ENCODE measurements at regions of chr12 and their contacts with region 1.

Region 1: GRCh38 chr12:104215638-104216297 is at the start of gene TXNRD1:
- DNase-seq: peak; percentile 67 to 91 (median 83)
- ATAC-seq: peak; percentile 97
- H3K4me3 ChIP-seq: peak within 1 kb of the TSS; percentile 63 to 69
- H3K4me3 Mint-ChIP-seq: peak within 1 kb of the TSS; percentile 83
- H3K27ac ChIP-seq: peak within 1 kb of the TSS in 1 of 2 experiments; percentile 26
- H3K27ac Mint-ChIP-seq: peak within 1 kb of the TSS; percentile 64
- H3K4me1 ChIP-seq: peaks cover 9% of the 10 kb centered on the region
- H3K4me1 Mint-ChIP-seq: peaks cover 18% of the 10 kb centered on the region
- H3K27me3 ChIP-seq: no peaks in the 10 kb centered on the region
- H3K27me3 Mint-ChIP-seq: peaks cover 3% of the 10 kb centered on the region
- CTCF ChIP-seq: peak; percentile 80
- total RNA-seq, gene TXNRD1: 25.1 to 33.1 TPM

Region 2: GRCh38 chr12:104303538-104304151 is 87.9 kb after region 1 on chr12 and contains the start of gene EID3:
- CTCF ChIA-PET with region 1: interaction called, 10 read pairs
- POLR2A ChIA-PET with region 1: interaction called, 4 read pairs
- intact Hi-C with region 1: loop called (anchors 1 to 5 kb)
- DNase-seq: peak; percentile 78 to 92 (median 91)
- ATAC-seq: peak; percentile 96
- H3K4me3 ChIP-seq: peak within 1 kb of the TSS; percentile 63 to 74
- H3K4me3 Mint-ChIP-seq: peak within 1 kb of the TSS; percentile 95
- H3K27ac ChIP-seq: peak within 1 kb of the TSS; percentile 60 to 80
- H3K27ac Mint-ChIP-seq: peak within 1 kb of the TSS; percentile 98
- H3K4me1 ChIP-seq: peaks cover 27% of the 10 kb centered on the region
- H3K4me1 Mint-ChIP-seq: peaks cover 62% of the 10 kb centered on the region
- H3K27me3 ChIP-seq: no peaks in the 10 kb centered on the region
- H3K27me3 Mint-ChIP-seq: no peaks in the 10 kb centered on the region
- CTCF ChIP-seq: no peak
- total RNA-seq, gene EID3: 11.7 to 13.0 TPM

Region 3: DNA sequence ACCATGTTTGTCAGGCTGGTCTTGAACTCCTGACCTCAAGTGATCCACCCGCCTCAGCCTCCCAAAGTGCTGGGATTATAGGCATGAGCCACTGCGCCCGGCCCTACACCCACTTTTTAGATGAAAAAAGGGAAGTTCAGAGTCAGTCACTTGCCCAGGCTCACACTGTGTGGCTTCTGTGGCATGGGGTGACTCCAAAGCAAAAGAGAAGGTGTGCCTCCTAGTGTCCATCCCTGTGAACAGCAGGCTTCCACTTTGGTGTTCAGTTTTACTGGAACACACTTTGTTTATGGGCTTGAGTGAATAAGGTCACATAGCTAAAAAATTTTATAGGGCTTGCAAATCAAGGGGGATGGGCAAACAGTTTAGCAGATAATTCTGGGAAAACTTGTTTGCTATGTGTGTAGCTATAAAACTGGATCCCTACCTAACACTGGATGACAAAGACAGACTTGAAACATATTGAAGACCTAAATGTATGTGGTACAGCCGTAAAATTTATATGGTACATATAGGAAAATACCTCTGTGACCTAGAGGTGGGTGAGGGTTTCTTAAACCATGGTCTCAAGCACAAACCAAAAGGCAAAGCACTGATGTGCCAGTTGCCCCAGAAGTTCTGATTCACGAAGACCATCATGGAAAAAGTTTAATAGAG is 142.7 kb after region 1 on chr12:
- CTCF ChIA-PET with region 1: interaction called, 12 read pairs
- POLR2A ChIA-PET with region 1: no interaction called
- intact Hi-C with region 1: loop called (anchors 1 kb)
- DNase-seq: peak; percentile 38 to 80 (median 69)
- ATAC-seq: peak; percentile 98
- H3K4me3 ChIP-seq: no peak overlapping the region
- H3K4me3 Mint-ChIP-seq: no peak overlapping the region
- H3K27ac ChIP-seq: no peak overlapping the region
- H3K27ac Mint-ChIP-seq: no peak overlapping the region
- H3K4me1 ChIP-seq: no peaks in the 10 kb centered on the region
- H3K4me1 Mint-ChIP-seq: no peaks in the 10 kb centered on the region
- H3K27me3 ChIP-seq: no peaks in the 10 kb centered on the region
- H3K27me3 Mint-ChIP-seq: no peaks in the 10 kb centered on the region
- CTCF ChIP-seq: peak; percentile 83

Region 4: GRCh38 chr12:104877123-104877705 is 661.4 kb after region 1 on chr12:
- CTCF ChIA-PET with region 1: no interaction called
- POLR2A ChIA-PET with region 1: no interaction called
- intact Hi-C with region 1: loop called (anchors 1 kb)
- DNase-seq: peak; percentile 3 to 60 (median 31)
- ATAC-seq: no peak
- H3K4me3 ChIP-seq: no peak overlapping the region
- H3K4me3 Mint-ChIP-seq: no peak overlapping the region
- H3K27ac ChIP-seq: no peak overlapping the region
- H3K27ac Mint-ChIP-seq: no peak overlapping the region
- H3K4me1 ChIP-seq: no peaks in the 10 kb centered on the region
- H3K4me1 Mint-ChIP-seq: no peaks in the 10 kb centered on the region
- H3K27me3 ChIP-seq: no peaks in the 10 kb centered on the region
- H3K27me3 Mint-ChIP-seq: no peaks in the 10 kb centered on the region
- CTCF ChIP-seq: peak; percentile 83

Region 5: DNA sequence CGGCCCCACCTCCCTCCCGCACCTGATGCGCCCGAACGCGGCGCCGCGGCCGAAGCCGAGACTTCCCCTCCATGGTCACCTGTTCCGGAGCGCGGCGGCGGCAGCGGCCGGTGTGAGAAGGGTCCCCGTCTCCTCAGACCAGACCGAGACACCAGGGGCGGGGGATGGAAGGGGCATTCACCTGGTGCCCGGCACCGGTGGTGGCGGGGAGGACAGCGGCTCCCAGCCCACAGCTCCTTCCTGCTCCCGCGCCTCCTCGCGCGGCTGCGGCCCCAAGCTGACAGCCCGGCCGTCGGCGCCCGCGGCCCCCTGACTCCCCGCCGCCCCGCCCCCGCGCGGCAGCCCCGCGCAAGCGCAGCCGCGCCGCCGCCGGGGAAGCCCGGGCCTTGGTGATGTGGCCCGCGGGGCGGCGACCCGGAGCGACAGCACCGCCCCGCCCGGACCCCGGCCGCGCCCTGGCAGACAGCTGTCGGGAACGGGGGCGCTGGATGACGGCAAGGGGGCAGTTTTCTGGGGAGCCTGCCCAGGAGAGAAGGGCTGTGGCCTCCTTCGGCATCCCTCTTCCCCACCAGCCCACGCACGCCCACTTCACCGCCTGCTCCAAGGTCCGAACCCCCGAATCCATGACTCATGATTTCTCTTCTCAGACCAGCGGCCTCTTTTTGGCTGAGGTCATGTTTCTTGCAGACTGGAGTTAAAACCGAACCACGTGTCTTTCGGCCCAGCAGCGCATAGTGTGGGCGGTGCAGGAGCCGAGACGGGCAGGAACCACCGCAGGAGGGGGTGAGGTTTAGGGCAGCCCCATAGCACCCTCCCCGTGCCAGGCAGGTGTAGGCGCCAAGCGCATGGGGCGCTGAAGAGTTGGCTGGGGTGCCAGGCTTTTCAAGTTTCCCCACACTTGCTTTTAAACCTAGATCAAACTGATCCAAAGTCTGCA is 742.5 kb after region 1 on chr12 and contains the start of gene SLC41A2:
- CTCF ChIA-PET with region 1: no interaction called
- POLR2A ChIA-PET with region 1: no interaction called
- intact Hi-C with region 1: loop called in 1 of 2 experiments (anchors 10 kb)
- DNase-seq: peak; percentile 52 to 90 (median 76)
- ATAC-seq: peak; percentile 90
- H3K4me3 ChIP-seq: peak within 1 kb of the TSS; percentile 61 to 97
- H3K4me3 Mint-ChIP-seq: peak within 1 kb of the TSS; percentile 94
- H3K27ac ChIP-seq: peak within 1 kb of the TSS; percentile 40 to 42
- H3K27ac Mint-ChIP-seq: peak within 1 kb of the TSS; percentile 85
- H3K4me1 ChIP-seq: peaks cover 13% of the 10 kb centered on the region
- H3K4me1 Mint-ChIP-seq: peaks cover 19% of the 10 kb centered on the region
- H3K27me3 ChIP-seq: no peaks in the 10 kb centered on the region
- H3K27me3 Mint-ChIP-seq: peaks cover 17% of the 10 kb centered on the region
- CTCF ChIP-seq: no peak
- total RNA-seq, gene SLC41A2: 3.4 to 4.2 TPM

Region 6: DNA sequence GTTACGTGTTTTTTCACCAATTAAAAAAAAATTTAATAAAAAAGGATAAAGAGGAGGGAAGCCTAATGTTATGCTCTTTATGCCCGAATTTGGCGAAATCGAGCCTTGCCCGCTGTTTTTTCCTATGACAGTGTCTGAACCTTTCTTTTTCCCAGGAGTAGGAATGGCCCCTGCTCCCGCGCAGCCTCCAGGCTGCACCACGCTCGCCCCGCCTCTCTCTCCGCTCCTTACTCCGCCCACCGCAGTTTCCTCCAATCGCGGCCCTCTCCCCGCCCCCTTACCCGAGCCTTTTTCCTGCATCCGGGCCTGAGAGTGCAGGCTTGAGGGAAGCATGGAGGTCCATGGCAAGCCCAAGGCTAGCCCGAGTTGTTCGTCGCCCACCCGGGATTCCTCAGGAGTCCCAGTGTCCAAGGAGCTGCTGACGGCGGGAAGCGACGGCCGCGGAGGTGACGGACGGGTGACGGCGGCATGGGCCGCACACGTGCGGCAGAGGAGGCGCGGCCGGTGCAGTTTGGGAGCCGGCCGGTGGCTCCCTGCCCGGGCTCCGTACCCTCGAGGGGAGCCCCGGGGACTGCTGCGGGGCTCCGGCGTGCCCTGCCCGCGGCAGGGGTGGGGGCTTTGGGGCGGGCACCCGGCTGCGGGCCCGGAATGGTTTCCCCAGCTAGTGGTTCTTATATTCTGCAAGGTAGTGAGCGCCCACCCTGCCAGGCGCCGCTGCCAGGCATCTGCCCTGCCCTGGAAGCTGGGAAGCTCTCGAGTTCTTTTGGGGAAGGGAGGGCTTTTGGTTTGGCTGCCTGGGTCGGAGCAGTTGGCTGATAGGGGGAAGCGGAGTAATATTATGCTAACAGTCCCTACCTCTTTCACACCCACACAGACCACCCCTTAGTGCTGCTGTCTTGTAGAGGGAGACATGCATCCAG is 770.5 kb after region 1 on chr12 and contains the start of gene NOPCHAP1:
- CTCF ChIA-PET with region 1: no interaction called
- POLR2A ChIA-PET with region 1: no interaction called
- intact Hi-C with region 1: loop called in 1 of 2 experiments (anchors 1 kb)
- DNase-seq: peak; percentile 66 to 89 (median 82)
- ATAC-seq: peak; percentile 98
- H3K4me3 ChIP-seq: peak within 1 kb of the TSS; percentile 70 to 93
- H3K4me3 Mint-ChIP-seq: peak within 1 kb of the TSS; percentile 90
- H3K27ac ChIP-seq: peak within 1 kb of the TSS; percentile 33 to 55
- H3K27ac Mint-ChIP-seq: peak within 1 kb of the TSS; percentile 80
- H3K4me1 ChIP-seq: peaks cover 16% of the 10 kb centered on the region
- H3K4me1 Mint-ChIP-seq: peaks cover 35% of the 10 kb centered on the region
- H3K27me3 ChIP-seq: no peaks in the 10 kb centered on the region
- H3K27me3 Mint-ChIP-seq: no peaks in the 10 kb centered on the region
- CTCF ChIP-seq: no peak
- total RNA-seq, gene NOPCHAP1: 13.2 to 16.5 TPM

Measured in CD8-positive, alpha-beta T cell (primary cell).